ENCODE measurements at regions of chr2 and their contacts with region 1.

Region 1: DNA sequence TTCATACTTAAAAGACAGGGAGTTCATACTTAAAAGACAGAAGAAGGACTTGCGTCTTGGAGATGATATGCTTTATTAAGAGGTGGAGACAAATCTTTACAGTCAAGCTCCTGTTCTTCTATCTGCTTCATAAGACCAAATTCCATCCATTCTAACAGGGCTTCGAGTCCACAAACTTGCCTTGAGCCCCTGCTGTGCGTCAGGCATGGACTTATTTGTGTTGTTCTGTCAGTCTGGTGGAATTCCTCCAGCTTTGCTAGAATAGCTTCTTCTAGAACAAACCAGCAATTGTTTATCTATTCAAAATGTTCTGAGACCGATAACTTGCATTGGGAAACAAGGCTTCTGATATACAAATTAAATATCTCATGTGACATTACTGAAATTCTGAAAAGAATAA is 73.9 kb upstream of the SOX11 start:
- DNase-seq: no peak
- H3K4me3 ChIP-seq: no peak overlapping the region
- H3K27ac ChIP-seq: no peak overlapping the region
- H3K4me1 ChIP-seq: no peaks in the 10 kb centered on the region
- CTCF ChIP-seq: no peak

Region 2: GRCh38 chr2:5391362-5391761 is 226.9 kb before region 1 on chr2:
- CTCF ChIA-PET with region 1: no interaction called
- POLR2A ChIA-PET with region 1: interaction called, 10 read pairs
- intact Hi-C with region 1: no loop called
- DNase-seq: no peak
- H3K4me3 ChIP-seq: no peak overlapping the region
- H3K27ac ChIP-seq: no peak overlapping the region
- H3K4me1 ChIP-seq: no peaks in the 10 kb centered on the region
- CTCF ChIP-seq: no peak

Region 3: DNA sequence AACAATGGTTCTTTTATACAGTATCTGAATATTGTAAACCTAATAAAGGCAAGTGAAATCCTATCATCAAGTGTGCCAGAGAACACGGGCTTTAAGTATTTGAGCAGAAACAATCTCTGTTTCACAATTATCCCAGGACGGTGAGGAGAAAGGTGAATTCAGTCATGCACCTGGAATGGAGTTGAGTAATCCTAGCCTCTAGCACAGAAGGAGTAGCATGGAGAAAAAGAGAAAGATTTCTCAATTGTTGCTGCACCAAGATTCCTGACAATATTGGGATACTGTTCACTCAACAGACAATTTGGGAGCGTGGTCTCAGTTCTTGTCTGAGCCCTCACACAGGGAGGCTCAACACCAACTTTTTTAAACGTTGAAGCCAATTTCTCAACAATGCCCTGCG is 584.5 kb after region 1 on chr2:
- CTCF ChIA-PET with region 1: no interaction called
- POLR2A ChIA-PET with region 1: no interaction called
- intact Hi-C with region 1: no loop called
- DNase-seq: no peak
- H3K4me3 ChIP-seq: no peak overlapping the region
- H3K27ac ChIP-seq: no peak overlapping the region
- H3K4me1 ChIP-seq: no peaks in the 10 kb centered on the region
- CTCF ChIP-seq: no peak